CD8-positive, alpha-beta T cell (primary cell): ENCODE measurements at regions of chr13 and their contacts with region 1.

Region 1: DNA sequence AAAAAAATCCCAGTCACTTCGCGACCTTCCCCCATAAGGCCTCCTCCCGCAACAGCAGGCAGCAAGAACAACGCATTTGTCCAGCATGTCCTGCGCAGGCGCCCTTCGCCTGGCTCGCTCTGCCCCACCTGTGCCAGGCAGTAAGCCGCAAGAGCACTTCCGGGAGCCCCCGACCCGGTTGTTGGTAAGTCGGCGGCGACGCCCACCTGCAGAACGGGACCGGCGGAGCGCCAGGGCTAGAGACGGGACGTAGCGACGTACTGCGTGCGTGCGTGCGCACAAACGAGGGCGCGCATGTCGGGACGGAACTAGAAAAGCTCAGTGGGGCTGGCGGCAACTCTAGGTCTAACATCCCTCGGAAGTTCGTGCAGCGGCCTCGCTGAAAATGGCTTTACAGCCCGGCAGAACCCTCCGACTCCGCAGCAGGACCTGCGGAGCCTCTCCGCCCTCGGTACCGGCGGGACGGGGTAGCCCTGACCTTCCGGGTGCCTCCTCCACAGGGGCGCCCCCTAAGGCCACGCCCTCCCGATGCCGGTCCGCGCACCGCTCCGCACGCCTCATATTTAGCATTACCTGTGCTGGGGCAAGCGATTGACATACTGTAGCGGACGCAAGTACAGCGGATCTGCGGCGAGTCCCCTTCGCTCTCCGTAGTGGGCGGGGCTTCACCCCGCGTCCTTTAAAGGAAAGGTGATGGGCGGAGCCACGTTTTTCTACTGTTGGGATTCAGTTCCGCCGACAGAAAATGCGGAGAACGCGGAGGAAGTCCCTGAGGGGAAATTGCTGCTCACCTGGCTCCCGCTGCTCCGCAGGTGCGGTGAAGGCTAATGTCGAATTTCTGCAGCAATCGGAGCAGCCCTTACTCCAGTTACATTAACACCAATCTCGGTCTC is at the start of gene MTIF3:
- DNase-seq: peak; percentile 94 to 99 (median 98)
- ATAC-seq: peak; percentile 81
- H3K4me3 ChIP-seq: peak within 1 kb of the TSS; percentile 82 to 92
- H3K4me3 Mint-ChIP-seq: peak within 1 kb of the TSS; percentile 93
- H3K27ac ChIP-seq: peak within 1 kb of the TSS; percentile 90 to 97
- H3K27ac Mint-ChIP-seq: peak within 1 kb of the TSS; percentile 99
- H3K4me1 ChIP-seq: peaks cover 54% of the 10 kb centered on the region
- H3K4me1 Mint-ChIP-seq: peaks cover 57% of the 10 kb centered on the region
- H3K27me3 ChIP-seq: no peaks in the 10 kb centered on the region
- H3K27me3 Mint-ChIP-seq: no peaks in the 10 kb centered on the region
- CTCF ChIP-seq: no peak
- total RNA-seq, gene MTIF3: 12.7 to 13.0 TPM

Region 2: DNA sequence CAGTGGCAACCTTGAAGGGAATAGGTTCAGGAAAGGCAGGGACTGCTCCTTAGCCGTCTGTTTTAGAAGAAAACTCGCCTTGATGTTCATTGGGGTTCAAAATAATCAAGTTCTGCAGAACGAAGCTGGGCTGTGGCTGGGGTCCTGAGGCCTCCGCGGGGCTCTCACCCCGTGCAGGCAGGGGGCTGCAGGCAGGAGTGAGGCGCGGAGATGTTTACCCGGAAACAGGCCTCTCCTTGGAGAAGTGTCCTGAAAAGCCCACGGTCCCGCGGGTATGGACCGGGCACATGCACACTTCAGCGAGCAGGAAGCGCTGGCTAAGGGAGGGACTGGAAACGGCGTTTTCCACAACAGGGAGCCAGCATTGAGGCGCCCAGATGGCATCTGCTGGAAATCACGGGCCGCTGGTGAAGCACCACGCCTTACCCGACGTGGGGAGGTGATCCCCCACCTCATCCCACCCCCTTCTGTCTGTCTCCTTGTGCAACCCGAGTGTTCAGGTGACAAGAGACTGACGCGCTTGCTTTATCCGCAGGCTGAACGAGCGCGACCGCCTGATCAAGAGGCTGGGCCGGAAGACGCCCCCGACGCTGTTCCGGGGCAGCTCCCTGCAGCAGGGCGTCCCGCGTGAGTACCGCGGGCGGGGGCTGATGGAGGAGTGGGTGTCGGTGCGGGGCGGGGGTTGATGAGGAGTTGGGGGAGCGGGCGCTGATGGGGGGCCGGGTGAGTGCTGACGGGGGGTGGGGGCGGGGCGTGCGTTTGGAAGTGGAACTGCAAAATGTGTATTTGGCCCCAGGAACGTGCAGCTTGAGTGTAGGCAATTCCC is 1438.0 kb before region 1 on chr13:
- CTCF ChIA-PET with region 1: no interaction called
- POLR2A ChIA-PET with region 1: no interaction called
- intact Hi-C with region 1: loop called in 1 of 2 experiments (anchors 10 kb)
- DNase-seq: peak; percentile 43 to 91 (median 77)
- ATAC-seq: peak; percentile 96
- H3K4me3 ChIP-seq: peak overlapping the region; percentile 62 to 64
- H3K4me3 Mint-ChIP-seq: peak overlapping the region; percentile 84
- H3K27ac ChIP-seq: peak overlapping the region; percentile 83 to 86
- H3K27ac Mint-ChIP-seq: peak overlapping the region; percentile 97
- H3K4me1 ChIP-seq: peaks cover 21% of the 10 kb centered on the region
- H3K4me1 Mint-ChIP-seq: peaks cover 51% of the 10 kb centered on the region
- H3K27me3 ChIP-seq: no peaks in the 10 kb centered on the region
- H3K27me3 Mint-ChIP-seq: no peaks in the 10 kb centered on the region
- CTCF ChIP-seq: no peak

Region 3: GRCh38 chr13:26253787-26254582 is 1196.2 kb before region 1 on chr13 and contains the start of gene CDK8:
- CTCF ChIA-PET with region 1: no interaction called
- POLR2A ChIA-PET with region 1: no interaction called
- intact Hi-C with region 1: loop called in 1 of 2 experiments (anchors 10 kb)
- DNase-seq: peak; percentile 78 to 95 (median 90)
- ATAC-seq: peak; percentile 87
- H3K4me3 ChIP-seq: peak within 1 kb of the TSS; percentile 79 to 100
- H3K4me3 Mint-ChIP-seq: peak within 1 kb of the TSS; percentile 90
- H3K27ac ChIP-seq: peak within 1 kb of the TSS; percentile 59 to 92
- H3K27ac Mint-ChIP-seq: peak within 1 kb of the TSS; percentile 88
- H3K4me1 ChIP-seq: peaks cover 27% of the 10 kb centered on the region
- H3K4me1 Mint-ChIP-seq: peaks cover 37% of the 10 kb centered on the region
- H3K27me3 ChIP-seq: no peaks in the 10 kb centered on the region
- H3K27me3 Mint-ChIP-seq: peaks cover 2% of the 10 kb centered on the region
- CTCF ChIP-seq: no peak
- total RNA-seq, gene CDK8: 4.9 to 5.3 TPM

Region 4: GRCh38 chr13:26412263-26412662 is 1037.9 kb before region 1 on chr13:
- CTCF ChIA-PET with region 1: no interaction called
- POLR2A ChIA-PET with region 1: no interaction called
- intact Hi-C with region 1: no loop called
- DNase-seq: no peak
- ATAC-seq: no peak
- H3K4me3 ChIP-seq: no peak overlapping the region
- H3K4me3 Mint-ChIP-seq: no peak overlapping the region
- H3K27ac ChIP-seq: no peak overlapping the region
- H3K27ac Mint-ChIP-seq: no peak overlapping the region
- H3K4me1 ChIP-seq: no peaks in the 10 kb centered on the region
- H3K4me1 Mint-ChIP-seq: no peaks in the 10 kb centered on the region
- H3K27me3 ChIP-seq: no peaks in the 10 kb centered on the region
- H3K27me3 Mint-ChIP-seq: no peaks in the 10 kb centered on the region
- CTCF ChIP-seq: no peak

Region 5: DNA sequence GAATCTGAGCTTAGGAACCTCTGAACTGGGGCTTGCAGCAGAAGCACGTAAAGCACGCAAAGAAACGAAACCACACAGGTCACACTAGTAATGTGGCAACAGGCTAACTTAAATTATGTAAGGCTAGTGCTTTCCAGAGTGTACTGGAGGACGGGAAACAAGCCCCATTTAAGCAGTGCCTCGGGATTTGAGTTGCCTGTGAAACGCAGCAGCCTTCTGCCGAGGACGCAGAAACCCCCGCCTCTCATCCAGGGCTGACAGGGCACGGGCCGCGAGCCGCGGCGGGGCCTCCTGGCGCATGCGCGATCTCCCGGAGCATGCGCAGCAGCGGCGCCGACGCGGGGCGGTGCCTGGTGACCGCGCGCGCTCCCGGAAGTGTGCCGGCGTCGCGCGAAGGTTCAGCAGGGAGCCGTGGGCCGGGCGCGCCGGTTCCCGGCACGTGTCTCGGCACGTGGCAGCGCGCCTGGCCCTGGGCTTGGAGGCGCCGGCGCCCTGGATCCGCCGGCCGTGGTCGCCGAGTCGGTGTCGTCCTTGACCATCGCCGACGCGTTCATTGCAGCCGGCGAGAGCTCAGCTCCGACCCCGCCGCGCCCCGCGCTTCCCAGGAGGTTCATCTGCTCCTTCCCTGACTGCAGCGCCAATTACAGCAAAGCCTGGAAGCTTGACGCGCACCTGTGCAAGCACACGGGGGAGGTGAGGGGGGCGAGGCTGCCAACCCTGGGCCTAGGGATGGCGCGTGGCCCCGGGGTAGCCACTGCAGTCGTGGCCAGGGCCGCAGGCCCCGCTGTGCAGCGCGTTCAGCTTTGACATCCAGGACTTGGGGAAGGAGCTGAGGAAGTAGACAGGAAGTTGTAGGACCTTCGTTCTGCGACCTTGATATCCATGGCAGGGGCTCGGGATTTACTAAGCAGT is 25.7 kb before region 1 on chr13 and contains the start of gene GTF3A:
- CTCF ChIA-PET with region 1: interaction called, 62 read pairs
- POLR2A ChIA-PET with region 1: interaction called, 171 read pairs
- intact Hi-C with region 1: loop called (anchors 1 kb)
- DNase-seq: peak; percentile 74 to 95 (median 87)
- ATAC-seq: peak; percentile 57
- H3K4me3 ChIP-seq: peak within 1 kb of the TSS; percentile 76 to 83
- H3K4me3 Mint-ChIP-seq: peak within 1 kb of the TSS; percentile 82
- H3K27ac ChIP-seq: peak within 1 kb of the TSS; percentile 85 to 95
- H3K27ac Mint-ChIP-seq: peak within 1 kb of the TSS; percentile 97
- H3K4me1 ChIP-seq: peaks cover 43% of the 10 kb centered on the region
- H3K4me1 Mint-ChIP-seq: peaks cover 48% of the 10 kb centered on the region
- H3K27me3 ChIP-seq: no peaks in the 10 kb centered on the region
- H3K27me3 Mint-ChIP-seq: no peaks in the 10 kb centered on the region
- CTCF ChIP-seq: no peak
- total RNA-seq, gene GTF3A: 157 TPM

Region 6: DNA sequence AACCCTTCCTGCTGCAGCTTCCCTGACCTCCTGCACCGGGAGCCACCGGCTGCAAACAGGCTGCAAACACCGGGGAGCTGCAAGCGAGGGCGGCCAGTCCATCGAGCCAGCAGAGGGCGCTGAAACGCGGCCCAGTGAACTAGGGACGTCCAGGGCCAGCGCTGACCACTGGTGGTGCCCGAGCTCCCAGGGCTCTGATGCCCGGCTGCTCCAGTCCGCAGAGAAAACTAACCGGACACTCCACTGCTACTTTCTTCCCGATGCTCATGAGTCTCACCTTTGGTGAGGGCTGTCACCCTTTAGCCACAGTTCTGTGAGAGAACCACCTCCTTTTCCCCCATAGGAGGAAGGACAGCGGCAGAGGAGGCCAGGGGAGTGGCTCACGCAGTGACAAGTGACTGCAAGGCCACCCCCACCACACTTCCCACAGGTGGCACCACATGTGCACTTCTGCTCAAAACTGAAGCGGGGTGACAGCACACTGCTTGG is 83.0 kb after region 1 on chr13:
- CTCF ChIA-PET with region 1: interaction called, 5 read pairs
- POLR2A ChIA-PET with region 1: interaction called, 3 read pairs
- intact Hi-C with region 1: loop called in 1 of 2 experiments (anchors 10 kb)
- DNase-seq: peak; percentile 12 to 67 (median 52)
- ATAC-seq: peak; percentile 78
- H3K4me3 ChIP-seq: peak overlapping the region in 1 of 2 experiments; percentile 28
- H3K4me3 Mint-ChIP-seq: no peak overlapping the region
- H3K27ac ChIP-seq: no peak overlapping the region
- H3K27ac Mint-ChIP-seq: no peak overlapping the region
- H3K4me1 ChIP-seq: peaks cover 10% of the 10 kb centered on the region
- H3K4me1 Mint-ChIP-seq: peaks cover 7% of the 10 kb centered on the region
- H3K27me3 ChIP-seq: no peaks in the 10 kb centered on the region
- H3K27me3 Mint-ChIP-seq: peaks cover 3% of the 10 kb centered on the region
- CTCF ChIP-seq: peak; percentile 74